Colonic mucosa (tissue), 4 donors: ENCODE measurements at regions of chr4 and their contacts with region 1.

Region 1: GRCh38 chr4:162645381-162645780 is 481.6 kb upstream of the FSTL5 start:
- DNase-seq: no peak
- H3K4me3 ChIP-seq: no peak overlapping the region
- H3K27ac ChIP-seq: no peak overlapping the region
- H3K4me1 ChIP-seq: no peaks in the 10 kb centered on the region
- H3K27me3 ChIP-seq: no peaks in the 10 kb centered on the region
- CTCF ChIP-seq: peak; percentile 32

Region 2: DNA sequence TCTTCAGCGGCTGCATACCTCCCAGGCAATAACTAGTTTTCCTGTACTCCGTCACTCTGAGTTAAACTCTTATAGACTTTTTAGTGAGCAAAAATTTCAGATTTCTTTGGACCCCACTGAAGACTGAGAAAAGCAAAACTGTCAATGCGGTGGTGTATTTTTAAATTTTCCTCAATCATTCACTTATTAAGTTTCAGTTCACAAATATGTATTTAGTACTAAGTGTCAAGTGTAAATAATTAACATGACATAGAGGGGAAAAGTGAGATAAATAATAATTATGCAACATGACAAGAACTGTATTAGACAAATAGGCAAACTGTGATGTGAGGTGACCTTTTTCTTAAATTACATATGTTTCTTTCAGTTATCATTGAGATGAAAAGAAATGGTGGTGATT is 396.9 kb after region 1 on chr4:
- intact Hi-C with region 1: loop called (anchors 5 kb)
- DNase-seq: no peak
- H3K4me3 ChIP-seq: no peak overlapping the region
- H3K27ac ChIP-seq: no peak overlapping the region
- H3K4me1 ChIP-seq: no peaks in the 10 kb centered on the region
- H3K27me3 ChIP-seq: no peaks in the 10 kb centered on the region
- CTCF ChIP-seq: no peak

Region 3: GRCh38 chr4:163157157-163157556 is 511.8 kb after region 1 on chr4:
- intact Hi-C with region 1: no loop called
- DNase-seq: no peak
- H3K4me3 ChIP-seq: no peak overlapping the region
- H3K27ac ChIP-seq: no peak overlapping the region
- H3K4me1 ChIP-seq: no peaks in the 10 kb centered on the region
- H3K27me3 ChIP-seq: no peaks in the 10 kb centered on the region
- CTCF ChIP-seq: no peak